ENCODE measurements at regions of chr1 and their contacts with region 1.

Region 1: DNA sequence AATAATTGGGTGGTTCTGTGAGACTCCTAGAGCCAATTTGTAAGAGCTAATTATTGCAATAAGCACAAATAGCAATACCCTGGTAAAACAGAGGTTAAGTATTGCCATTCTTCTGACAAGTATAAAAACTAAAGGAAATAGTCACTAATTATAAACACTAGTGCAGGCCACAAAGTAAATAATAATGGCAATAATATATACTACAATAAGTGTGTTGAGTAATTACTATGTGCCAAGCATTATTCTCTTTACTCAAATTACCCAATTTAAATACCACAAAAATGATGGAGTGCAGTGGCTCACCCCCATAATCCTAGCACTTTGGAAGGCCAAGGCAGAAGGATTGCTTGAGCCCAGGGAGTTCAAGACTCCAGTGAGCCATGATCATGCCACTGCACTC is 15.3 kb downstream of the ZMYM6 start:
- DNase-seq: no peak
- H3K4me3 ChIP-seq: no peak overlapping the region
- H3K27ac ChIP-seq: no peak overlapping the region
- H3K4me1 ChIP-seq: no peaks in the 10 kb centered on the region
- H3K27me3 ChIP-seq: no peaks in the 10 kb centered on the region
- CTCF ChIP-seq: no peak

Region 2: DNA sequence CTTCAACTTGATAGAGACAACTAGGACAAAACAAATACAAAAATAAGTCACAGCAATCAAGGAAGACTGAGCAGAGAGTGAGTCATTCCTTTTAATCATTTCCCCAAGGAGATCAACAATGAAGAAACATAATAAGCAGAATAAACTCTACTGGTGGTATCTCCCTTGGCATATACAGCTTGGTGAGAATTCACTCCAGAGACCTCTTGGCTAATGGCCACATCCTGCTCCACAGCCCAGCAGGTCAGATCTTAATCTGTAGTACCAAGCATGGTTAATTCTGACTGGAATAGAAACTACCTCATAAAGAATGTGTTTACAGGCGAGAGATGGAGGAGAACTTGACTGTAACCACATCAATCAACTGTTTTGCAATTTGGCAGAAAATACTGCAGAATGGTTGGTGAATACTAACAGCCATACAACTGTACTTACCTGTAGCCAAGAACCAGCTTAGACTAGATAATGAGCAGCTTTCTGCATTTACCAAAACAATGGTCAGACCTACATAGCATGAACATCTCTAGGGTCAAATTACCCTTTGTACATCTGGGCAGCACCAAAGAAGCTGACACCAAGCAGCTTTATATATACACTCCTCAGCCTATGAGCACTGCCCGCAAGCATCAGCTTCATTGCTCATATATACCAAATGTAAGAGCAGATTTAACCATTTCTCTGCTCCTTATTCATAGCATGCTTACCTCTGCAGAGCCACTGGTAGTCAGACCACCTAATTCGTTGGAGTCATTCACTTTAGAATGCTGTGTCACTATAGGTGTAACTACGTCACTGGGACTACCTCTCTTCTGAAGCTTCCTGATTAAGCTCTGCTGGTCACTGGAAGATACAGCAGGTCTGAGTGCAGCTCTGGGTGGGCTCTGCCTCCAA is 489.7 kb after region 1 on chr1:
- CTCF ChIA-PET with region 1: no interaction called
- POLR2A ChIA-PET with region 1: interaction called, 10 read pairs
- intact Hi-C with region 1: no loop called
- DNase-seq: peak; percentile 77 to 98
- H3K4me3 ChIP-seq: no peak overlapping the region
- H3K27ac ChIP-seq: peak overlapping the region; percentile 71
- H3K4me1 ChIP-seq: peaks cover 51% of the 10 kb centered on the region
- H3K27me3 ChIP-seq: no peaks in the 10 kb centered on the region
- CTCF ChIP-seq: no peak